CD4-positive, alpha-beta memory T cell (primary cell): ENCODE measurements at regions of chr17 and their contacts with region 1.

Region 1: DNA sequence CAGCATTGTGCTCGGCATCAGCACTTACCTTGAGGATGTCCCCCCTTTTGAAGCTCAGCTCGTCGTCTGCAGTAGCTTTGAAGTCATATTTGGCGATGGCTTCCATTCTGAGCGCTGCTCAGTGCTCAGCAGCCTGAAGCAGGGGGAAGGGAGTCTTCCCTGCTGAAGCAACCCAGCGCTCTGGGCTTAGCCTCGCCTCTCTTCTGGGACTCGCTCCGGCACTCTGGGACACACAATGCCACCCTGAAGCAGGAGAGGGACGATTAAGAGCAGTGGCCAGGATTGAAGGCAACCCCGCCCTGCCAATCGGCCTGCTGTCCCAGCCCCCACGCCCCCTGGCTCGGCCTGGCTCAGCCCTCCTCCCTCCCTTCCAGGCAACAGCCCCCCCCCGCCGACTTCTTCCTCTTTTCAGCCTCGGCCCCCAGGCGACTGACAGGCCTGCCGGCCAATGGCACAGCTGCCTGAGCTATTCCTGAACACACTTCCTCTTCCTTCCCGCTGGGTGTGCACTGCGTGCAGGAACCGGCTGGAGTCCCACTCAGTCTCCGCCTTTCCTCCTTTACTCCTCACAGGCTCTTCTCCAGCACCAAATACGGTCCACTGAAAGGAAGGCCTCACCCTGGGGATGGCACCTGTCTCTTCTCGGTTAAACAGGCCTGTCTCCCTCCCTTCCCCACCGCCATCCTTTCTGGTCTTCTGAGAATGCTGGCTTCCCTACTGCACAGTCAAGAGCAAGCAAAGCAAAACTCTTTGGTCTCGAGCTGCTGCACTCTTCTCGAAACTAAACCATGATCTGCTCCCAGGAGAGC is 11.8 kb downstream of the GRB2 start:
- DNase-seq: peak; percentile 66 to 86 (median 75)
- H3K4me3 ChIP-seq: peak overlapping the region; percentile 30 to 60
- H3K4me3 Mint-ChIP-seq: peak overlapping the region; percentile 90 to 97 (median 95)
- H3K27ac ChIP-seq: peak overlapping the region; percentile 66
- H3K27ac Mint-ChIP-seq: peak overlapping the region; percentile 71 to 96 (median 89)
- H3K4me1 ChIP-seq: peaks cover 78% of the 10 kb centered on the region
- H3K4me1 Mint-ChIP-seq: peaks cover 63 to 88% (median 72%) of the 10 kb centered on the region in 4 donors
- H3K27me3 ChIP-seq: no peaks in the 10 kb centered on the region
- H3K27me3 Mint-ChIP-seq: no peaks in the 10 kb centered on the region

Region 2: DNA sequence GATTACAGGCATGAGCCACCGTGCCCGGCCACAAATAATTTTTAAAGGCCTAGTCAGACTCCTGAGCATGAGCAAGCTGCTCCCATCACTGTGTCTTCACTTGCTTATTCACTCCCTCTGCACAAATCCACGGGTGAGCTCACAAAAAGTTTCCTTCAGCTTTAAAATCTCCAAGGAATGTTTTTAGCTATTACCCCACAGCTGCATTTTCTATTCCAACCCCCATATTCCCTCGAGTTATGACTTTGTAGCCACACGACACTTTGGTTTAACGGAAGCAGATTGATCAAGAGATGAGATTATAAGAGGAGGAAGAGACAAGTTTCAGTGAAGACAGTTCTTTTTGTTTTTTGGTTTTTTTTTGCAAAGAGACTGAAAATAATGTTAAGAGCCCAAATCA is 55.4 kb before region 1 on chr17:
- CTCF ChIA-PET with region 1: interaction called, 6 read pairs
- POLR2A ChIA-PET with region 1: interaction called, 10 read pairs
- intact Hi-C with region 1: no loop called
- DNase-seq: peak in 4 of 5 donors; percentile 27 to 38 (median 30)
- H3K4me3 ChIP-seq: no peak overlapping the region
- H3K4me3 Mint-ChIP-seq: peak overlapping the region; percentile 49 to 86 (median 74)
- H3K27ac ChIP-seq: peak overlapping the region; percentile 22
- H3K27ac Mint-ChIP-seq: peak overlapping the region; percentile 21 to 91 (median 76)
- H3K4me1 ChIP-seq: peaks cover 86% of the 10 kb centered on the region
- H3K4me1 Mint-ChIP-seq: peaks cover 54 to 84% (median 68%) of the 10 kb centered on the region in 4 donors
- H3K27me3 ChIP-seq: no peaks in the 10 kb centered on the region
- H3K27me3 Mint-ChIP-seq: no peaks in the 10 kb centered on the region

Region 3: GRCh38 chr17:75440738-75441448 is 47.2 kb after region 1 on chr17:
- CTCF ChIA-PET with region 1: no interaction called
- POLR2A ChIA-PET with region 1: no interaction called
- intact Hi-C with region 1: no loop called
- DNase-seq: no peak
- H3K4me3 ChIP-seq: no peak overlapping the region
- H3K4me3 Mint-ChIP-seq: no peak overlapping the region
- H3K27ac ChIP-seq: no peak overlapping the region
- H3K27ac Mint-ChIP-seq: peak overlapping the region in 3 of 7 donors; percentile 16 to 68 (median 61)
- H3K4me1 ChIP-seq: peaks cover 6% of the 10 kb centered on the region
- H3K4me1 Mint-ChIP-seq: peaks cover 7 to 10% (median 10%) of the 10 kb centered on the region in 4 donors
- H3K27me3 ChIP-seq: no peaks in the 10 kb centered on the region
- H3K27me3 Mint-ChIP-seq: no peaks in the 10 kb centered on the region

Region 4: DNA sequence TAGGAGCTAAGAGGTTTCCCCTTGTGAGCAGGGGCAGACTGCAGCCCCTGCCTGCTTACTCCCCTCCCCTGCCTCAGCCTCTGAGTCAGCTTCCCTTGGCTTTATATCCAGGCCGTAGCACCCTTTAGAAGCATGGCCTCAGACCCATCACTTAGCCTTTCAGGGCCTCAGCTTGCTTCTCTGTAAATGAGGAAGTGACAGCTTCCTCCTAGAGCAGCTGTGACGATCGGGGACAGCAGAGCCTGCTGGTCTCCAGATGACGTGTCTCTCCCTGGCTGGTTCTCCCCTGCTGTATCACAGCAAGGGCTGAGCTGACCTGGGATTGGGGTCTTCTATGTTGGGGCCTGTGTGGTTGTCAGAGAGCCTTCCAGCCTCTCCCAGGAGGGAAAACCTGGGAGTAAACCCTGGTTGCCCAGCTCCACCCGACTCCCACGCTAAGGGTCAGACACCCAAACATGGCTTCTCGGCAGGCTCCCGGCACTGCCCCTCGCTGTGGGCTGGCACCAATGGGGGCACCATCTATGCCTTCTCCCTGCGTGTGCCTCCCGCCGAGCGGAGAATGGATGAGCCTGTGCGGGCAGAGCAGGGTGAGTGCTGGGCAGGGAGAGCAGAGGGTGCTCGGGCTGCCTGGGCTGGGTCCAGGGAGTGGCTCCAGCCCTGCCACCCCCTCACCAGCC is 177.6 kb after region 1 on chr17:
- CTCF ChIA-PET with region 1: no interaction called
- POLR2A ChIA-PET with region 1: no interaction called
- intact Hi-C with region 1: no loop called
- DNase-seq: no peak
- H3K4me3 ChIP-seq: no peak overlapping the region
- H3K4me3 Mint-ChIP-seq: no peak overlapping the region
- H3K27ac ChIP-seq: no peak overlapping the region
- H3K27ac Mint-ChIP-seq: no peak overlapping the region
- H3K4me1 ChIP-seq: no peaks in the 10 kb centered on the region
- H3K4me1 Mint-ChIP-seq: no peaks in the 10 kb centered on the region
- H3K27me3 ChIP-seq: no peaks in the 10 kb centered on the region
- H3K27me3 Mint-ChIP-seq: no peaks in the 10 kb centered on the region

Region 5: DNA sequence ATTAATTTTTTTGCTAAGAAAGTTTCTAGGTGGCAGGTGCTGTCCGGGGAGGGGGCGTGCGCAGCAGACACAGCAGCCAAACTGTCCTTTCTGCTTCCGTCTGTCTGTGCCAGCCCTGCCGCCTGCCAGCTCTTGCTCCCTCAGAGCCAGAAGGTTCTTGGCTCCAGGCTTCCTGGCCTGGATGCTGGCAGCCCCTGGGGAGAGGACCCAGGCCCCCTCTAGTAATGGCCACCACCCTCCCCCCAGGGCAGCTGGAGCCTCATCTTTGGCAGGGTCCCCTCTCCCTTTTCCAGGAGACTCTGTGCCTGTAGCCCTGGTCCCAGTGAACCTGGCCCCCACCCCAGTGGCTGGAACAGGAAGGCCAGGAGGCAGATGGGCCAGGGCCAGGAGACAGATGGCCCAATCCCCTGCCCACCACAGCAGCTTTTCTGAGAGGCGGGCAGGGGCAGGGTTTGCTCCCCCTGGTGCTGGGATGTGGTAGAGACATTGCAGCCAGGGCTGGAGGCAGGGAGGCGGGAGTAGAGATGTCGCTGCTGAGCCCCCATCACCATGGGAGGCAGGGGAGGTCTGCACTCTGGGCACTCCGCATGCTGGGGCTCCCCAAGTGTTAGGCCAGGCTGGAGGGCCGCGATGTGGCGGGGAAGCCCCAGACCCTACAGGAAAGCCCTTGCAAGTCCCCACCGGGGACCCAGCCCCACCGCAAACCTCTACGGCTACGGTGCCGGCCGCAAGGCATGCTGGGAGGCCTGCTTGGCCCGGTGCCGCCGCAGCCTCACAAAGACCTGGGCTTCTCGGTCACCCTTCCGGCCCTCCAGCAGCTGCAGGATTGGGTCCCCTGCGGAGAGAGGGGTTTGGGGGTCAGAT is 433.8 kb after region 1 on chr17:
- CTCF ChIA-PET with region 1: no interaction called
- POLR2A ChIA-PET with region 1: no interaction called
- intact Hi-C with region 1: no loop called
- DNase-seq: peak; percentile 55 to 80 (median 71)
- H3K4me3 ChIP-seq: no peak overlapping the region
- H3K4me3 Mint-ChIP-seq: peak overlapping the region; percentile 17 to 73 (median 56)
- H3K27ac ChIP-seq: peak overlapping the region; percentile 59
- H3K27ac Mint-ChIP-seq: peak overlapping the region; percentile 66 to 91 (median 83)
- H3K4me1 ChIP-seq: peaks cover 26% of the 10 kb centered on the region
- H3K4me1 Mint-ChIP-seq: peaks cover 5 to 24% (median 14%) of the 10 kb centered on the region in 4 donors
- H3K27me3 ChIP-seq: no peaks in the 10 kb centered on the region
- H3K27me3 Mint-ChIP-seq: no peaks in the 10 kb centered on the region